Activated CD8-positive, alpha-beta memory T cell treated with anti-CD3 and anti-CD28 coated beads, Interleukin-2, amount 10 ng/mL, durations not matched to agents 7 days and 5 days (primary cell): ENCODE measurements at regions of chr11 and their contacts with region 1.

Region 1: DNA sequence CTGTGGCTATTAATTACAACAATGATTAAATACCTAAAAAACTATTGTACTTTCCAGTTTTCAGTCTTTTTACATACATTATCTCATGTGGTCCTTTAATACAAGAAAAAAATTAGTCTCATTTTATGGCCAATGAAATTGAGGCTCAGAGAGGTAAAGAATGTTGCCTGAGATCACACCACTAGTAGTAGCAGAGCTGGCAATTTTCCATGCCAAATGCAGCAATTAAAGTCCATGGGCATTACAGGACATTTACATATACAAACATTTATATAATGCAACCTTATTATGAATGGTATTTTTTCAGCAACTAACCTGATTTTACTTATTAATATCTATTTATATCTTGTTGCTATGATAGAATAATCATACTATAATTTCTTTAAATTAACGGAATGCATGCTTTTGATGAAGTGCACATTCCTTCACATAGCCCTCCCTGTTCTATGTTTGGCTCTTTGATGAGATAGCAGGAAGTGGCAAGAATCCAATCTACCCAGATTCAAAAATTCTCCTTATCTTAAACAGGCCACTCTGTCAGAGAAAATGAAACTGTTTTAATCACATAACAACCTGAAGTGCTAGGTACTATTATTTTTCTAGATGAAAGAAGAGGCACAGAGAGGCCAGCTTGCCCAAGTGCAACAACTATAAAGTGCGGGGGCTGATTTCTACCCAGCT is 120.9 kb upstream of the LDLRAD3 start:
- DNase-seq: no peak
- ATAC-seq: no peak
- H3K4me3 Mint-ChIP-seq: no peak overlapping the region
- H3K27ac Mint-ChIP-seq: no peak overlapping the region
- H3K4me1 Mint-ChIP-seq: peaks cover 4% of the 10 kb centered on the region
- H3K27me3 Mint-ChIP-seq: no peaks in the 10 kb centered on the region

Region 2: GRCh38 chr11:35792148-35792845 is 30.7 kb before region 1 on chr11:
- CTCF ChIA-PET with region 1: interaction called, 13 read pairs
- DNase-seq: no peak
- ATAC-seq: no peak
- H3K4me3 Mint-ChIP-seq: no peak overlapping the region
- H3K27ac Mint-ChIP-seq: no peak overlapping the region
- H3K4me1 Mint-ChIP-seq: no peaks in the 10 kb centered on the region
- H3K27me3 Mint-ChIP-seq: no peaks in the 10 kb centered on the region

Region 3: DNA sequence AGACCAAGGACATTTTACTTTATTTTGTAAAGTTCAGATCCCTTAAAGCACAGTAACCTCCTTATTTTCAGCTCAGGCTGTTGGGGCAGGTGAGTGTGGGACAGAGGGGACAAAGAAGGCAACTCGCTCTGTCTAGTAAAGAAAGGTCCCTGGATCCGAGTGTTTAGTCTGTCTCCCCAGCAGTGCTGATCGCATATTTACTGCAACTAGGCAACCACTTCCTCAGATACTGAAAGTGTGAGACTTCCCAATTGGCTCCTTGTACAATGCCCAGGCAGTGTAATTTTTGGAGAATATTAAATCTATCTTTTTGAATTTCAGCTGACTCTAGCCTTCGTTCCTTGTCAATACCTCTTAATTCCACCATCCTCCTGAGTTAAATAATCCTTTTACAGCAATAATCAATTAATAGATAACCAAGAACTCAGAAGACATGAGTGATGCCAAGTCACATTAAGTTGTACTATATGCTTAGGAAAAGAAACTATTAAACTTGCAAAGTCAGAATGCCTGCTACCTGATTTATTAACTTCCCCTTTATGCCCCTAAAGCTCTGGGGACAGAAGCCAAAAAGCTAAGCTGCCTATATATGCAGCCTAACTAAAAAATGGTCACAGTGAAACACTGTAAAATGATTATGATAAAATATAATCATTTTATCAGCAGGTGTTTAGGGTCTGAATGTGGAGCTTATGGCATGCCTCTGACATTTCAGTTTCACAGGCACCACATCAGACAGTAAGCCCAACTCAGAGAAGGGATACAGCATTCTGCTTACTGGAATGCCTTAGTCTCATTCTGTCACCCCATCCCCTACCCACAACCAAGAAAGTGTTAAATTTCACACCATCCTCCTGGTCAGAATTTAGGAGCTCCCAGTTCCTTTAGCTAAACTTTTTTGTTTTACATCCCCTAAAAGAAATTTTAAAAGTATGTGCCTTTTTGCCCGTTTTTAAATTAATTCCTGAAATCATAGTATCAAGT is 21.7 kb before region 1 on chr11:
- CTCF ChIA-PET with region 1: interaction called, 20 read pairs
- DNase-seq: no peak
- ATAC-seq: no peak
- H3K4me3 Mint-ChIP-seq: no peak overlapping the region
- H3K27ac Mint-ChIP-seq: no peak overlapping the region
- H3K4me1 Mint-ChIP-seq: peaks cover 7% of the 10 kb centered on the region
- H3K27me3 Mint-ChIP-seq: no peaks in the 10 kb centered on the region

Region 4: DNA sequence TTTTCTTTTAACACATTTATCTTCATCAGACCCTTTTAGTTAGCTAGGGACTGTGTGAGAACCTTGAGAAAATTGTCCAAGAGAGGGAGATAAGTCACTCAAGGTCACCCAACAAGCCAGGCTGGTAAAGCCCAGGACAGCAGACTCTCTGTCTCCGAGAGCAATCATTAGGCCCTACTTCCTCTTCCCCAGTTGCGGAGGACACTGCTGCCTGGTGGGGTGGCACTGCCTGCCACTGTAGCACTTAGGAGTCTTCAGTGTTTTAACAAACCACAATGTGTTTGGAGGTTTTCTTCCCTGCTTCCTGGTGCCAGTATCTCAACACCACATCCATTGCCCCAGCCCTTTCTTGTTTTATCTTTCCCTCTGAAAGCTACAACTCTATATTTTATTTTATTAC is 11.2 kb before region 1 on chr11:
- CTCF ChIA-PET with region 1: interaction called, 12 read pairs
- DNase-seq: no peak
- ATAC-seq: no peak
- H3K4me3 Mint-ChIP-seq: no peak overlapping the region
- H3K27ac Mint-ChIP-seq: no peak overlapping the region
- H3K4me1 Mint-ChIP-seq: no peaks in the 10 kb centered on the region
- H3K27me3 Mint-ChIP-seq: no peaks in the 10 kb centered on the region

Region 5: DNA sequence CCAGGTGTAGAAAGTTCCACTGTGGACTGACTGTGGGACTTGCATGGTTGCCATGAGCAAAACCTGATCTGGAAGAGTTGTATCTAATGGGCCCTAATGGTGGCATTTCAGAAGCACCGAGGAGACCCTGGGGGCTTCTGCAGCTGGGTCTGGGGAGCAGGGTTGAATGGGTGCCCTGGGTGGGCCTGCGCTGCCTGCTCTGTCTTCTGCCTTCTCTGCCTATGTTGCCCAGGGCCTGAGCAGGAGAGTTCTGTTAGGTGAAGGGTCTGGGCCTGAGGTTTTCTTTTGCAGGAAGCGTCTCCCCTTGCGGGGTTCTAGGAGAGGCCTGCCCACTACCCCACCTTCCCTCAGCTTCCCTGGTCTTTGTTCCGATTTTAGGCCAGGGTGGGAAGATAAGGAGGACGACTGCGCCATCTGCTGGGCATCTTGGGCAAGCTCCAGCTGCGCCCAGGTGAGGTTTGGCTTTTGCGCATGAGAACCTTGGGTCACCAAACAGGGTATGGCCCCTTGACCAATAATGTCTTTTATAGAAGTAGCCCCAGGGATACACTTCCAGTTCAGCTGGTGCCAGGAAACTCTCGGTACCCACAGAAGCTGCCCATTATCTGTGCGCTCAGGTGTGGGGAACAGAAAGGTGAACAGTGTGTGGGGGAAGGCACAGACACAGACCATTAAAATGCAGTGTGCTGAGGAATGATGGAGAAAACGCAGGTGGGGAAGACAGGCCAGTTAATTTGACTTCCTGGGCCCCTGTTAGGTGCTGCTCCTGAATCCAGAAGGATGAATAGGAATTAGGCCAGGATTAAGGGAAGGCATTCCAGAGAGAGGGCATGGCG is 443.1 kb after region 1 on chr11:
- CTCF ChIA-PET with region 1: interaction called, 10 read pairs
- DNase-seq: peak; percentile 56
- ATAC-seq: peak; percentile 74
- H3K4me3 Mint-ChIP-seq: no peak overlapping the region
- H3K27ac Mint-ChIP-seq: no peak overlapping the region
- H3K4me1 Mint-ChIP-seq: no peaks in the 10 kb centered on the region
- H3K27me3 Mint-ChIP-seq: peaks cover 12% of the 10 kb centered on the region